ENCODE measurements at regions of chr13 and their contacts with region 1.

Region 1: DNA sequence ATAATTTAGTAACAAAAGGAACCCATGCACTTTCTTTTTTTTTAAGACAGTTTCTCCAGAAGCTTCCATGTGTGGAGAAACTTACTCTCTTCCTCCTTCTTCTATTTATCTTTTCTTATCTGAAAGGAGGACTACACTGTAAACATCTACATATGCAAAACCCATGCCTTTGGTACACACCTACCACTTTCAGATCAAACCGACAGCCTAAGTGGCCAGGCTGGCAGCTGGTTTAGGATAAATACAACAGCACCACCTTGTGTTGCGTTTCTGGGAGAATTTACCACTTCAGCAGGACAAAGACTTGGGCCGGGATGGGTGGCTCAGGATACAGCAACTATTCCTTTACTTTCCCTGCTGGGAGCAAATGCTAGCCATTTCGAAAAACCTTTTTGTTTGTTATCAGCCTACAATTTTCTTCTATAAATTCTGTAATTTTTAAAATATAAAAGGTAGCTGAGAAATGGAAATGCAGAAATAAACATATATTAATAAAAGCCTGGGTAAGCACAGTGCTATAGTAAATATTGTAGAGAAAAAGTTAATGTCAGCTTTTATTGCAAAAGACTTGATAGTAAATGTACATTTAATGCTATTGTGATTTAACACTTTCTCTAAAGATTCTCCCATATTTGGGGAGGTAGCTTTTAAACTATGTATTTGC is 94.0 kb upstream of the RFC3 start:
- DNase-seq: peak; percentile 63 to 83 (median 69)
- H3K4me3 ChIP-seq: no peak overlapping the region
- H3K27ac ChIP-seq: no peak overlapping the region
- H3K4me1 ChIP-seq: peaks cover 1% of the 10 kb centered on the region
- H3K27me3 ChIP-seq: no peaks in the 10 kb centered on the region
- CTCF ChIP-seq: peak; percentile 71 to 77 (median 72)
- EP300 ChIP-seq: no peak
- POLR2A ChIP-seq: no peak

Region 2: DNA sequence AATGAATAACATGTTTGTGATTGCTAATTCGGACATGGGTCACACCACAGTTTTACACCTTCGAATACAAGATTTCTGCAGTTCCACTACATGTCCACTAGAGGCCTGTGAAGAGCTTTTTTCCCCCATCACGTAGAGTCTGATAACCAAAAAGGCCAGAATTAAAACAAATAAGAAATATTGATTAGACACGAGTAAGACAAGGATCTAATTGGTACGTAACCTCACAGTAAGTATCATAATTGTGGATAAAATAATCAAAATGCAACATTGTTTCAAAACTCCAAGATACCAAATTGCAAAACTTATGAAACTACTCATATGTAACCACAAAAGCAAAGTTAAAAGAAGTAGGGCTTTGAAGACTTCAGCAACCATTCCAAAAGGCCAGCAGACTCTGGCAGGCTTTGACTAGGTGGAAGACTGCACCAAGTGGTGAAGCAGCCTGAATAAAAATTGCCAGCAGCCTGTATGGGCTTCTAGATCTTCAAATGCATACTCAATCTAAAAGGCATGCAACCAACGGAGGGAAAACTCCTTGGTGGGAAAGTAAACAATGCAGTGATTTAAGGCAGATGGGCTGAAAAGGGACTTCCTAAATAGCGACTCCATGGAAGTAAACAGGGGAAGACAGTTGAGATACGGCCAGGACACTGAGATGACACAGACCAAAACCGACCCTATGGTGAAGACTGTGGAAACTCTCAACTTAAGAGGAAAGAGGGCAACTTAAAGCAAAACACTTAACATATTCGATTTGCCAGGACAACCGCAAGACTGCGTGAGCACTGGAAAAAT is 495.1 kb before region 1 on chr13:
- intact Hi-C with region 1: loop called in 1 of 4 experiments (anchors 10 kb)
- DNase-seq: peak in 1 of 5 donors; percentile 20
- H3K4me3 ChIP-seq: no peak overlapping the region
- H3K27ac ChIP-seq: peak overlapping the region in 1 of 2 donors; percentile 43
- H3K4me1 ChIP-seq: peaks cover 7% of the 10 kb centered on the region
- H3K27me3 ChIP-seq: no peaks in the 10 kb centered on the region
- CTCF ChIP-seq: peak; percentile 83 to 94 (median 86)
- EP300 ChIP-seq: no peak
- POLR2A ChIP-seq: no peak

Region 3: GRCh38 chr13:33528896-33529295 is 195.0 kb before region 1 on chr13:
- intact Hi-C with region 1: no loop called
- DNase-seq: no peak
- H3K4me3 ChIP-seq: no peak overlapping the region
- H3K27ac ChIP-seq: no peak overlapping the region
- H3K4me1 ChIP-seq: no peaks in the 10 kb centered on the region
- H3K27me3 ChIP-seq: no peaks in the 10 kb centered on the region
- CTCF ChIP-seq: no peak
- EP300 ChIP-seq: no peak
- POLR2A ChIP-seq: no peak

Region 4: DNA sequence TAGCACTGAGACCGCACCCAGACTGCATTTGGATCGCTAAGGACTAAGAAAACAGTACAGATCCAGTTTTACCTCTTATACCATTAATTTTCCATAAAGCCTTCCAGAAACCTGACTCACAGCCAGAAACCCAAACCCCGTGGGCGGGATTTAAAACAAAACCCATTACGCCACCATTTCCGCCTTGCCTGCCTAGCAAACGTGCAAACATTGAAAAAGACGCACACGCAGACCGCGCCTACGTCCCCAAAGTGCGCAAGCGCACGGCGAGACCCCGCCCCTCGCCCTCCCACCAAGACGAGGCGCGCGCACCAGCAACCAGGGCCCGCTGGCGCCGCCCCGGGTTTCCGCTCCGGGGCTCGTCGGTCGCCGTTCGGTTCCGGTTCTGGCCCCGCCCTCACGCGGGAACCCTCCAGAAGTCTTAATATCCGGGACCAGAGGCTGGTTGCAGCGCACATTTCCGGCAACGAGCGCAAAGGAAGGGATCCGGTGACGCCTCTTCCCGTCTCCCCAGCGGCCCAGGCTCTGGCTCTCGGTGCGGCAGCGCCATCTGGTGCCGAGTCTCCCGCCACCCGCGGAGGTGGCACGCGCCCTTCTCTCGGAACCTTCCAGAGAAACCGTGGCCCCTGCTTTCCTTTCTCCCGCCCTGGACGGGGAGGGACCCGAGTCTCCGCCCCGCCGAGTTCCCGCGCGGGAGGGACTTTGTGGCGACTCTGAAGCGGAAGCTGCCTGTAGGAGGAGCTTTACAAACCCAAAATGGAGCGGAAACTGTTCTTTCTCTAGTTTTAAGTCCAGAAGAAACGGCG is 181.4 kb before region 1 on chr13:
- intact Hi-C with region 1: loop called in 1 of 4 experiments (anchors 10 kb)
- DNase-seq: peak; percentile 97 to 100 (median 98)
- H3K4me3 ChIP-seq: peak overlapping the region; percentile 38
- H3K27ac ChIP-seq: peak overlapping the region; percentile 92 to 96
- H3K4me1 ChIP-seq: peaks cover 4% of the 10 kb centered on the region
- H3K27me3 ChIP-seq: no peaks in the 10 kb centered on the region
- CTCF ChIP-seq: peak; percentile 92 to 97 (median 97)
- EP300 ChIP-seq: peak; percentile 96
- POLR2A ChIP-seq: peak; percentile 62

Region 5: DNA sequence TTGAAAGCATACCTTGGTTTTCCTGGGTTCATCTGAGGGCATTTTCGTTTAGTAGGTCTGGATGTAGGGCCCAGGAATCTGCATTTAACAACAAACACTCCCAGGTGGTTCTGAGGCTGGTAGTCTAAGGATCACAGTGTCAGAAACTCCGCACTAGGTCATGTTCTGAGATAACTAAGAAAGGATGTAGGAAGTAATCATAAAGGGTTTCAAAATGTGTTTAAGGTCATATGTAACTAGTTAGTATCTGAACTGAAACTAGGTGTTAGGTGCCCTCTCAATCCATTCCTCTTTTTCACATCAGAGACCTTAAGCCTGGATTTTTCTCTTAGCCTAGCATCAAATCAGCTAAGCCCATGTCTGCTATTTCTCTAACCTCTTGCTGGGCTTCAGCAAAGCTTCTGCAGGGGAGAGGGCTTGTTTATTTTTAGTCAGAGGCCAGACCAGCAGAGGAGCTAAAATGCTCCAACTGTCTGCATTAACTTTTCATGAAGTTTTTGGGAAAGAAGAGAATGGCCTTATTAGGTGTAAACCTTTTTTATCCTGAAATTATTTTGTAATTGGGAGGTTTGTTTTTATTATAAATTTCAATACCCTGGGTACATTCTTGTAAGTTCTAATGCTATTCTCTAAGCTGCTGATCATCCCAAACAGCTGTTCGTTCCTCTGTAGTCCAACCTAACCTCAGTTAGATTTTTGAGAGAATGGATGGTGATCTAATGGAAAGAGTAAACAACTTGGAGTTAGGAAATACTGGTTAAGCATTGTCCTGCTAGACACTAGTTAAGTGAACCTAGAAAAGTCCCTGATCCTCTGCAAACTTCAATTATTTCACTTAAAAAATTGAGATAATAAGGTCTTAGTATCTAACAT is 168.7 kb before region 1 on chr13:
- intact Hi-C with region 1: loop called in 3 of 4 experiments (anchors 10 kb)
- DNase-seq: no peak
- H3K4me3 ChIP-seq: no peak overlapping the region
- H3K27ac ChIP-seq: no peak overlapping the region
- H3K4me1 ChIP-seq: peaks cover 2% of the 10 kb centered on the region
- H3K27me3 ChIP-seq: no peaks in the 10 kb centered on the region
- CTCF ChIP-seq: no peak
- EP300 ChIP-seq: no peak
- POLR2A ChIP-seq: no peak

Region 6: GRCh38 chr13:33642374-33643068 is 81.4 kb before region 1 on chr13:
- intact Hi-C with region 1: loop called in 1 of 4 experiments (anchors 5 kb)
- DNase-seq: peak; percentile 41 to 77 (median 58)
- H3K4me3 ChIP-seq: no peak overlapping the region
- H3K27ac ChIP-seq: peak overlapping the region in 1 of 2 donors; percentile 70
- H3K4me1 ChIP-seq: peaks cover 35% of the 10 kb centered on the region
- H3K27me3 ChIP-seq: no peaks in the 10 kb centered on the region
- CTCF ChIP-seq: no peak
- EP300 ChIP-seq: no peak
- POLR2A ChIP-seq: no peak

Region 7: GRCh38 chr13:34037636-34038540 is 314.0 kb after region 1 on chr13:
- intact Hi-C with region 1: no loop called
- DNase-seq: no peak
- H3K4me3 ChIP-seq: no peak overlapping the region
- H3K27ac ChIP-seq: no peak overlapping the region
- H3K4me1 ChIP-seq: no peaks in the 10 kb centered on the region
- H3K27me3 ChIP-seq: no peaks in the 10 kb centered on the region
- CTCF ChIP-seq: no peak
- EP300 ChIP-seq: no peak
- POLR2A ChIP-seq: no peak

Measured in ovary (tissue), 10 donors.